ENCODE measurements at regions of chr3 and their contacts with region 1.

Region 1: DNA sequence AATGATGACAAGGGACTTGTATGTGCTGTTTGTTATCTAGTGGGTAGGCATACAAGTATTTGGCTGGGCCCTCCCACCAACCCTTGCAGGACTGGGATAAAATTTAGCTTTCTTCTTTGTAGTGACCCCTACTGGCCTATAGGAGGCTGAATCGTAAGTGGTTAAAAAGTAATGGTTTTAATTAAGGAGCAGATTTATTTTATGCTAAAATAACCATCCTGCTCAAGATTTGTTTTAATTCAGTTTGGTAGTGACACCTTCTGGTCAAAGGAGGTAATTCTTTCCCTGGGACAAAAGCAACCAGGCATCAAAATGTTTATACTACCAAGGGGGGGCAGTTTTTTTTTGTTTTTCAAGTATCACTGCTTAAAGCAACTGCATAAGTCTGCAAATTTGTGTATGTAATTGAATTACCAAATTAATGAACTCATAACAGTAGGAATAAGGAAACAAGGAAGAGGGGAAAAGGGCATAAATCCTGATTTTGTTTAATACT is 70.7 kb downstream of the TOP2B start:
- DNase-seq: no peak
- CTCF ChIP-seq: peak; percentile 39

Region 2: DNA sequence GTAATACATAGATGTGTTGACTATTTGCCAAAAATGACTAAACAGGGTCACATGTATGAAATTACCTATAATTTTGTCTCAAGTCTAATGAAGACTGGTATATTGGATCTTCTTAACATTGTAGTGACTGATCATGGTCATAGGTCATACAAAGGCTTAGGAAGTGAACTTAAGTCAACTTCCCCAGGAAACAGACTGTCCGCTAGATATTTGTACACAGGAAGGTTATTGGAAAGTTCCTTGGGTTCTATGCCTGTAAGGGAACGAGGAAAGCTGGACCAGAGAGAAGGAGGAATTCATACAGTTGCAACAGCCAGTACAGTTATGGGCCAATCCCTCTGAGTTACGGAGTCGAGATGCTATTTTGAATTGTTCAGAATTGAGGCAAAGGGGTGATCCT is 637.4 kb before region 1 on chr3:
- CTCF ChIA-PET with region 1: no interaction called
- POLR2A ChIA-PET with region 1: no interaction called
- DNase-seq: no peak
- CTCF ChIP-seq: no peak

Region 3: GRCh38 chr3:25572919-25573385 is 21.1 kb before region 1 on chr3:
- CTCF ChIA-PET with region 1: interaction called, 38 read pairs
- POLR2A ChIA-PET with region 1: no interaction called
- DNase-seq: no peak
- CTCF ChIP-seq: no peak

Region 4: DNA sequence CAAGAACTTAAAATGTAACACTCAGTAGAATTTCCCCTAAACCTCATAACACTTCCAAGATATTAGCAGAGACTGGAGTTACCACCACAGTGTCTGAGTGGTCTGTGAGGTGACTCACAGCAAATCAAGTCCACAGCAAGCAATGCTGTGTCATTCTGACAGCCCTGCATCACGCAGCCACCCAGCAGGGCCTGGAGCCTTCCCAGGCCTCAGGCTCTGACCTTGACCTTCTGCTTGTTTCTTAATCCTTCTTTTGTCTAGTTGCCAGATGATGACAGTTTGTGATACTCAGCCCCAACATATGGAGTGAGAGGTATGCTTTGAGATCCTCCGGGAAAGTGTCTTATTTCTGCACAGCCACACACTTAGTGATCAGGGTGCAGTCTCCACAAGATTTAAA is 11.8 kb before region 1 on chr3:
- CTCF ChIA-PET with region 1: interaction called, 38 read pairs
- POLR2A ChIA-PET with region 1: no interaction called
- DNase-seq: no peak
- CTCF ChIP-seq: no peak

Region 5: GRCh38 chr3:25604107-25604805 is 10.2 kb after region 1 on chr3:
- CTCF ChIA-PET with region 1: interaction called, 30 read pairs
- POLR2A ChIA-PET with region 1: no interaction called
- DNase-seq: no peak
- CTCF ChIP-seq: no peak

Region 6: GRCh38 chr3:25610779-25611178 is 16.7 kb after region 1 on chr3:
- CTCF ChIA-PET with region 1: interaction called, 10 read pairs
- POLR2A ChIA-PET with region 1: no interaction called
- DNase-seq: no peak
- CTCF ChIP-seq: no peak

Measured in GM10248 (cell line).